CD4-positive, alpha-beta memory T cell (primary cell): ENCODE measurements at regions of chr15 and their contacts with region 1.

Region 1: DNA sequence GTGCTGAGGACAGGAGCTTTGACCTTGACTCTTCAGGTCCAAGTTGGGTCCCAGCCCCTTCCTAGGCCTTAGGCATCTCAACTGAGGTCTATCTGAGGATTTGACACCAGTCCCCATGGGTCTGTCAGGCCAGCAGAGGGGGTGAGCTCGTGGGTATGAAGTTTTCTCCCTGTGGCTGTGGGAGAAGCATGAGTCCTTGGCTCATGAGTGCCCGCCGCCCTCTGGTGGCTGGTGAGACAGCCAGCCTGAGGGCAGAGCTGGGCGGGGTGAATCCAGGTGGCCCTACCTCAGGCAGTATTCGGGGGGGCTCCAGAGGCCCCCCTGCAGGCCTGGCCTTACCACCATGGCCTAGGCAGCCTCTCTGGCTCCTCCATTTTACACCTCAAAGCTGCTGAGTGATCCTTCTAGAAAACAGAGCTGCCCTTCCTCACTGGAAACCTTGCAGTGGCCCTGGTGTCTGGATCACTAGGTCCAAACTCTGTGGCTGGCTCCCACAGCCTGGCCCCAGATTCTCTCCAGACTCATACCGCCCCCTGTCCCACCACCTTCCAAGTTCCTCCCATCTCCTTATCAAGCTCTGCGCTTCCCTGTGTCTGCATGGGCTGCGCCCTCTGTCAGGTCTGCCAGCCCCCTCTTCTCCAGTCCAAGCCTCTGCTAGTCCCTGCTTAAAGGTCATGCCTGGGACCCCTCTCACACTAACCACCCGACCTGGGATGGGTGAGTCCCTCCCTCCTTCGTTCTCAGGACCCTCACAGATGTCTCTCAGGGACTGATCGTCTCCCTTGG is 16.1 kb downstream of the SH2D7 start:
- DNase-seq: peak; percentile 82 to 85 (median 82)
- H3K4me3 ChIP-seq: no peak overlapping the region
- H3K4me3 Mint-ChIP-seq: no peak overlapping the region
- H3K27ac ChIP-seq: no peak overlapping the region
- H3K27ac Mint-ChIP-seq: peak overlapping the region in 3 of 7 donors; percentile 24 to 62 (median 46)
- H3K4me1 ChIP-seq: peaks cover 34% of the 10 kb centered on the region
- H3K4me1 Mint-ChIP-seq: peaks cover 27 to 41% (median 31%) of the 10 kb centered on the region in 4 donors
- H3K27me3 ChIP-seq: no peaks in the 10 kb centered on the region
- H3K27me3 Mint-ChIP-seq: no peaks in the 10 kb centered on the region

Region 2: DNA sequence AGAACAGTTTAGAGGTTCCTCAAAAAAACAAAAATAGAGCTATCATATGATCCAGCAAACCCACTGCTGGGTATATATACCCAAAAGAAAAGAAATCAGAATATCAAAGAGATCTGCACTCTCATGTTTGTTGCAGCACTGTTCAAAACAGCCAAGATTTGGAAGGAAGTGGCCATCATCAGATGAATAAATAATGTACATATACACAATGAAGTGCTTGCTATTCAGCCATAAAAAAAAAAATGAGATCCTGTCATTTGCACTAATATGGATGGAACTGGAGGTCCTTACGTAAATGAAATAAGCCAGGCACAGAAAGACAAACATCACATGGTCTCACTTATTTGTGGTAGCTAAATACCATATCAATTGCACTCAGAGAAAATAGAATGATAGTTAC is 1261.7 kb before region 1 on chr15:
- CTCF ChIA-PET with region 1: no interaction called
- POLR2A ChIA-PET with region 1: no interaction called
- intact Hi-C with region 1: no loop called
- DNase-seq: no peak
- H3K4me3 ChIP-seq: no peak overlapping the region
- H3K4me3 Mint-ChIP-seq: no peak overlapping the region
- H3K27ac ChIP-seq: no peak overlapping the region
- H3K27ac Mint-ChIP-seq: peak overlapping the region in 1 of 7 donors; percentile 59
- H3K4me1 ChIP-seq: no peaks in the 10 kb centered on the region
- H3K4me1 Mint-ChIP-seq: peaks cover 15 to 40% (median 26%) of the 10 kb centered on the region in 4 donors
- H3K27me3 ChIP-seq: no peaks in the 10 kb centered on the region
- H3K27me3 Mint-ChIP-seq: no peaks in the 10 kb centered on the region

Region 3: DNA sequence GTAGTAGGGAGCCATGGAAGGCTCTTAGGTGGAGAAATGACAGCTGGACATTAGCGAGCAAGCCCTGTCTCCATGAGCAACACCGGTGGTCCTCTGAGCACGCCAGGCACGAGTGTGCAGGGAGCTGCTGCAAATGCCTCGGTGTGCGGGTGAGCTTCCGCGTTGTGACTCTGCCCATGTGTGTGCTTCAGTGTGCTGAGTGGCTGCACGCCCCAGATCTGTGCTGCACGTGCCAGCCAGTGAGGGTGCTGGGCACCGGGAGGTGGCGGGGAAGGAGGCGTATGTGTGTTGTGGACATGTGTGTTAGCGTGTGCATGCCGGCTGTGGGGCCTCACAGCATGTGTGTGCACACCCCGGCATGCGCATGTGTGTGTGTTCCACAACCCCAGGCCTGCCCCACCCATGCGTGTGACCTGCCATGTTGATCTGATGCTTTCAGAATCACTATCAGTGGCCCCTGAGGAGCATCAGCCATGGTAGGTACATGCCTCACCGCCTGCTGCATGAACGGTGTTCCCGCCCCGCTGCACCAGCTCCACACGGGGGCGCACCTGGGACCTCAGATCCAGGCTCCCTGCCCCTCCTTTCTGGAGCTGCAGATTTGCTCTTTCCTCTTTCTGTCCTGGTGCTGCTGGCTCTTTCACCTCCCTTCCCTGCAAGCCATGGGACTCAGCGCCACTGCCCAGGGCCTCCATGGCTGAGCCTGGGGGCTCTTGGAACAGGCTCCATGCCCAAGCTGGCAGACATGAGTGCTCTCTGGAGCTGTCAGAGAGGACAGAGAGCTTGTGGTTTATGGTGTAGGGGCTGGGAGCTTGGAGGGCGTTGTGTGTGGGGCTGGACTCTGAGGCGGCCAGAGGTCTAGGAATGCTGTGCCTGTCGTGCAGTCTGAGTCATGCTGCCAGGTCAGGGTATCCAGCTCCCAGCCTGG is 200.4 kb before region 1 on chr15:
- CTCF ChIA-PET with region 1: interaction called, 5 read pairs
- POLR2A ChIA-PET with region 1: no interaction called
- intact Hi-C with region 1: loop called (anchors 5 kb)
- DNase-seq: peak in 3 of 5 donors; percentile 12 to 36 (median 18)
- H3K4me3 ChIP-seq: no peak overlapping the region
- H3K4me3 Mint-ChIP-seq: no peak overlapping the region
- H3K27ac ChIP-seq: no peak overlapping the region
- H3K27ac Mint-ChIP-seq: no peak overlapping the region
- H3K4me1 ChIP-seq: no peaks in the 10 kb centered on the region
- H3K4me1 Mint-ChIP-seq: no peaks in the 10 kb centered on the region
- H3K27me3 ChIP-seq: no peaks in the 10 kb centered on the region
- H3K27me3 Mint-ChIP-seq: peaks cover 2 to 4% of the 10 kb centered on the region in 2 donors

Region 4: GRCh38 chr15:77989296-77990091 is 119.0 kb before region 1 on chr15:
- CTCF ChIA-PET with region 1: interaction called, 172 read pairs
- POLR2A ChIA-PET with region 1: no interaction called
- intact Hi-C with region 1: no loop called
- DNase-seq: no peak
- H3K4me3 ChIP-seq: no peak overlapping the region
- H3K4me3 Mint-ChIP-seq: no peak overlapping the region
- H3K27ac ChIP-seq: no peak overlapping the region
- H3K27ac Mint-ChIP-seq: peak overlapping the region in 2 of 7 donors; percentile 49 to 62
- H3K4me1 ChIP-seq: peaks cover 13% of the 10 kb centered on the region
- H3K4me1 Mint-ChIP-seq: peaks cover 10 to 26% (median 14%) of the 10 kb centered on the region in 4 donors
- H3K27me3 ChIP-seq: no peaks in the 10 kb centered on the region
- H3K27me3 Mint-ChIP-seq: no peaks in the 10 kb centered on the region

Region 5: DNA sequence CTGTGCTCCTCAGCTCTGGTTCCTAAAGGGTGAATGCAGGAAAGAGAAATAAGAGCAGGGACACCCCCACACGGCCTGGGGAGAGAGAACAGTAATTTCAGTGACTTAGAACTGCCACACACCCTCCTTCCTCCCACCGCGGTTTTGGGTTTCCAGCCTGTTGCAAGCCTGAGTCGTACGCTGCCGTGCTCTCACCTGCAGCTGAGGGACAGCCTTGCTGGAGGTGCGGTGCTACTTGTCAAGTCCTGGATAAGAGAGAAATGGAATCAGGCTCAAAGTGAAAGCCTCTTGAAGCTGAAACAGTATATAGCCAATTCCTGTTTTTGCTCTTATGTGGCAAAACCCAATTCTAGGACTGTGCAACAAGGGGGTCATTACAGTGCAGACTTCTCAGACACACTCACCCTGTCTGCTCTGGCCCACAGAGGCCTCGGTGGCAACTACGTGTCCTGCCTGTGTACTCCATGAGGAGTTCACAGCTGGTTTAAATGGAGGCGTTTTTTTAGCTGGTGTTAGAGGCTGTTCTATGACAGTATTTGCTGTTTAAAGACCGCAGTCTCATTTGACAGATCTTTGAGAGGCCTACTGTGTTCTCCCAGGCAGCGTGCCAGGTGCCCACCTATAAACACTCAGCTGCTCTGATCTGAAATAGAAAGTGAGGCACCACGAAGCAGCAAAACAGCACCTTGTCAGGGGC is 73.8 kb before region 1 on chr15:
- CTCF ChIA-PET with region 1: interaction called, 45 read pairs
- POLR2A ChIA-PET with region 1: interaction called, 21 read pairs
- intact Hi-C with region 1: loop called (anchors 2 kb)
- DNase-seq: peak; percentile 77 to 92 (median 80)
- H3K4me3 ChIP-seq: peak overlapping the region in 1 of 2 donors; percentile 37
- H3K4me3 Mint-ChIP-seq: peak overlapping the region; percentile 28 to 78 (median 70)
- H3K27ac ChIP-seq: peak overlapping the region; percentile 69
- H3K27ac Mint-ChIP-seq: peak overlapping the region; percentile 88 to 97 (median 95)
- H3K4me1 ChIP-seq: peaks cover 91% of the 10 kb centered on the region
- H3K4me1 Mint-ChIP-seq: peaks cover 66 to 85% (median 77%) of the 10 kb centered on the region in 4 donors
- H3K27me3 ChIP-seq: no peaks in the 10 kb centered on the region
- H3K27me3 Mint-ChIP-seq: no peaks in the 10 kb centered on the region

Region 6: GRCh38 chr15:78065284-78065872 is 43.1 kb before region 1 on chr15:
- CTCF ChIA-PET with region 1: interaction called, 41 read pairs
- POLR2A ChIA-PET with region 1: interaction called, 22 read pairs
- intact Hi-C with region 1: no loop called
- DNase-seq: peak in 3 of 5 donors; percentile 24 to 60 (median 30)
- H3K4me3 ChIP-seq: peak overlapping the region; percentile 19 to 23
- H3K4me3 Mint-ChIP-seq: peak overlapping the region in 1 of 8 donors; percentile 79
- H3K27ac ChIP-seq: peak overlapping the region; percentile 72
- H3K27ac Mint-ChIP-seq: no peak overlapping the region
- H3K4me1 ChIP-seq: peaks cover 98% of the 10 kb centered on the region
- H3K4me1 Mint-ChIP-seq: peaks cover 3 to 67% (median 25%) of the 10 kb centered on the region in 4 donors
- H3K27me3 ChIP-seq: no peaks in the 10 kb centered on the region
- H3K27me3 Mint-ChIP-seq: no peaks in the 10 kb centered on the region

Region 7: GRCh38 chr15:78131295-78132061 is 23.0 kb after region 1 on chr15 and contains the start of gene CIB2:
- CTCF ChIA-PET with region 1: interaction called, 16 read pairs
- POLR2A ChIA-PET with region 1: interaction called, 3 read pairs
- intact Hi-C with region 1: loop called (anchors 1 kb)
- DNase-seq: peak; percentile 72 to 82 (median 76)
- H3K4me3 ChIP-seq: peak within 1 kb of the TSS; percentile 81 to 88
- H3K4me3 Mint-ChIP-seq: peak within 1 kb of the TSS; percentile 79 to 93 (median 80)
- H3K27ac ChIP-seq: peak within 1 kb of the TSS; percentile 66
- H3K27ac Mint-ChIP-seq: peak within 1 kb of the TSS; percentile 79 to 95 (median 88)
- H3K4me1 ChIP-seq: peaks cover 12% of the 10 kb centered on the region
- H3K4me1 Mint-ChIP-seq: peaks cover 7 to 30% (median 20%) of the 10 kb centered on the region in 4 donors
- H3K27me3 ChIP-seq: no peaks in the 10 kb centered on the region
- H3K27me3 Mint-ChIP-seq: peaks cover 0 to 1% of the 10 kb centered on the region in 2 donors
- total RNA-seq, gene CIB2: 1.0 to 1.7 TPM

Region 8: DNA sequence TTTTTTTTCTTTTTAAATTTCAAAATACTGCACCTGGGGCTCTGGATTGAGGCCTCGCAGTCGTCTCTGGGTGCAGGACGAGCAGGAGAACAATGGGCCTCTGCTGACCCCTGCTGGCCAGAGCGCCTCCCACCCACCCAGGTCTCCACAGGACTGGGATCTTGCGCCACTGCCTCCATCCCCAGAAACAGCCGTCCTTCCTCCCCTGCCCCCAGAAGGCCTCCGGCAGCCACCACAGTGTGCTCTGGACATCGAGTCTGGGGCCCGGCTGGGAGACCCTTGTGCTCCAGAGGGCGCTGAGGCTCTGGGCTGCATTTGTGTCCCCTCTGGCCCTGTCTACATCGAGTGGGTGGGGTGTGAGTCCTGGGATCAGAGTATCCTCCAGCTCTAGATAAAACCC is 132.5 kb after region 1 on chr15:
- CTCF ChIA-PET with region 1: interaction called, 211 read pairs
- POLR2A ChIA-PET with region 1: no interaction called
- intact Hi-C with region 1: loop called (anchors 1 kb)
- DNase-seq: peak; percentile 70 to 78 (median 73)
- H3K4me3 ChIP-seq: no peak overlapping the region
- H3K4me3 Mint-ChIP-seq: no peak overlapping the region
- H3K27ac ChIP-seq: no peak overlapping the region
- H3K27ac Mint-ChIP-seq: no peak overlapping the region
- H3K4me1 ChIP-seq: no peaks in the 10 kb centered on the region
- H3K4me1 Mint-ChIP-seq: peaks cover 0 to 2% (median 0%) of the 10 kb centered on the region in 4 donors
- H3K27me3 ChIP-seq: no peaks in the 10 kb centered on the region
- H3K27me3 Mint-ChIP-seq: peaks cover 3% of the 10 kb centered on the region in 2 donors